ENCODE measurements at regions of chr5 and their contacts with region 1.

Region 1: GRCh38 chr5:143543358-143544255 is 140.1 kb upstream of the NR3C1 start:
- DNase-seq: peak; percentile 76
- ATAC-seq: peak; percentile 93
- H3K4me3 ChIP-seq: no peak overlapping the region
- H3K27ac ChIP-seq: peak overlapping the region; percentile 98
- H3K4me1 ChIP-seq: peaks cover 10% of the 10 kb centered on the region
- H3K27me3 ChIP-seq: no peaks in the 10 kb centered on the region
- CTCF ChIP-seq: no peak
- POLR2A ChIP-seq: no peak
- RAD21 ChIP-seq: no peak

Region 2: DNA sequence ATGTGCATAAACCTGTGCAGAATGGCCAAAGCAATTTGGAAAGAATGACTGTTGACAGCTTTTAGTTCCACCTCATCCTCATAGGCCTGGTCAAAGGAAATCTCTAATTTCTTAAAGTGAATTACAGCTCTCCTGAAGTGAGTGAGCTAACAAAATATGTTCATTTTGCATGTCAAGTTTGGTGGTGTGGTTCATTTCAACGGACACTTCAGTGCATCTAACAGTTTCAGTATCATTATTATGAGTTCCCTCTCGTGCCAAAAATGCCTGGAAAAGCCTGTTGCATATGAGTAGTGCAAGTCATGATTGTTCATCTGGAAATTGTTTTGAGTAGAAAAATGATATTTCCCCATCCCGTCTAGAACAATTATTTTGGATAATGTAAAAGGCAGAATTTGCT is 215.1 kb after region 1 on chr5:
- CTCF ChIA-PET with region 1: no interaction called
- POLR2A ChIA-PET with region 1: no interaction called
- dilution Hi-C with region 1: no loop called
- in situ Hi-C with region 1: no loop called
- intact Hi-C with region 1: loop called (anchors 5 kb)
- DNase-seq: peak; percentile 65
- ATAC-seq: peak; percentile 59
- H3K4me3 ChIP-seq: no peak overlapping the region
- H3K27ac ChIP-seq: peak overlapping the region; percentile 96; the same call in 1 of the 2 replicates
- H3K4me1 ChIP-seq: peaks cover 10% of the 10 kb centered on the region
- H3K27me3 ChIP-seq: no peaks in the 10 kb centered on the region
- CTCF ChIP-seq: no peak
- POLR2A ChIP-seq: no peak
- RAD21 ChIP-seq: no peak